AG04449 (cell line): ENCODE measurements at regions of chrX and their contacts with region 1.

Region 1: GRCh38 chrX:107672955-107673378 is 44.7 kb downstream of the PRPS1 start:
- DNase-seq: no peak
- H3K4me3 ChIP-seq: no peak overlapping the region
- CTCF ChIP-seq: peak; percentile 61

Region 2: DNA sequence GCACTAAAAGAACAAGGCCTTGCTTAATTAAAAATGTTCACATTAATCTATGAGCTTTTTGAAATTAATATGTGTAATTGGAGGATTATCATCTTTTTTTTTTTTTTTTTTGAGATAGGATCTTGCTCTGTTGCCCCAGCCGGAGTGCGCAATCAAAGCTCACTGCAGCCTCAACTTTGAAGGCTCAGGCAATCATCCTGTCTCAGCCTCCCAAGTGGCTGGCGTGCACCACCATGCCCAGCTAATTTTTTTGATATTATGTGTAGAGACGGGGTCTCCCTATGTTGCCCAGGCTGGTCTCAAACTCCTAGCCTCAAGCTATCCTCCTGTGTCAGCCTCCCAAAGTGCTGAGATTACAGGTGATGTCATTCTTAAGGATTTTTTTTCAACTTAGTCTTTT is 24.6 kb before region 1 on chrX:
- CTCF ChIA-PET with region 1: no interaction called
- POLR2A ChIA-PET with region 1: no interaction called
- DNase-seq: no peak
- H3K4me3 ChIP-seq: no peak overlapping the region
- CTCF ChIP-seq: no peak

Region 3: GRCh38 chrX:107662145-107662544 is 10.8 kb before region 1 on chrX:
- CTCF ChIA-PET with region 1: interaction called, 29 read pairs
- POLR2A ChIA-PET with region 1: no interaction called
- DNase-seq: no peak
- H3K4me3 ChIP-seq: no peak overlapping the region
- CTCF ChIP-seq: no peak

Region 4: GRCh38 chrX:107716816-107717700 is 44.1 kb after region 1 on chrX:
- CTCF ChIA-PET with region 1: interaction called, 116 read pairs
- POLR2A ChIA-PET with region 1: interaction called, 20 read pairs
- DNase-seq: no peak
- H3K4me3 ChIP-seq: peak overlapping the region; percentile 64
- CTCF ChIP-seq: no peak

Region 5: DNA sequence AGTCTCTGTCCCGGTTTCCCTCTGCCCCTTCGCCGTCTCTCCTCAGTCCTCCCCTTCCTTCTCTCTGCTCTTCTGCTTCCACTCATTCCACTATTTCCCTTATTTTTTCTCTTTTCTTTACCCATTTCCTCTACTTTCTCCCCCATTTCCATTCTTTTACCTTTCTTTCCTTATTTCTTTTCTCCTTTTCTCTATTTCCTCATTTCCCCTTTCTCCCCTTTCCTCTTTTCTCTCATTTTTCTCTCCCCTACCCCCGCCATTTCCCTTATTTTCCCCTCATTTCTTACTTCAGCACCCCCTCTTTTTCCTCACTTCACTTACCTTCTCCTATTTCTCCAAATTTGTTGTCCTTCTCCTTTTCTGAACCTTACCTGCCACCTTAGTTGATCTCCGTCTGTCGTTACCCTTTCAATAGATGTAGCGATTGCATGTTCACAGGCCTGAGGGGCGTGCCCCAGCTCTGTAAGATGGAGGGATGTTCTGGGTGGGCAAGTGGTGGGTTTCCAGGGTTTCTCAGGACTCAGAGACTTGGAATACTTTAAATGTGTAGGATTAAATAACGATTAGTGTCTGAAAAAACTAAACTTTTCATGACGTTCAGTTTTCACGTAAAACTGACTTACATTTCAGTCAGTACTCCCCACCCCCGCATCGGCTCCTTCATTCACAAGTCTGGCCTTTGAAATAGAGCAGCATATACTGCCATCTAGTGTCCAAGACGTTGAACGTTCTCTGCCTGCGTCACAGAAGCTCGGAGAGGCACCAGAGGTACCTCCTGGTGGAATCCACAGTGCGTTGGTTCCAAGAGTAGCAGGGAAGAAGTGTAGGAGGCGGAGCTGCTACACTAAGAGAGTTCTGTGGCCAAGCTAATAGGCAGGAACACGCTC is 103.9 kb after region 1 on chrX:
- CTCF ChIA-PET with region 1: interaction called, 28 read pairs
- POLR2A ChIA-PET with region 1: no interaction called
- DNase-seq: peak; percentile 57
- H3K4me3 ChIP-seq: peak overlapping the region; percentile 49
- CTCF ChIP-seq: peak; percentile 50

Region 6: DNA sequence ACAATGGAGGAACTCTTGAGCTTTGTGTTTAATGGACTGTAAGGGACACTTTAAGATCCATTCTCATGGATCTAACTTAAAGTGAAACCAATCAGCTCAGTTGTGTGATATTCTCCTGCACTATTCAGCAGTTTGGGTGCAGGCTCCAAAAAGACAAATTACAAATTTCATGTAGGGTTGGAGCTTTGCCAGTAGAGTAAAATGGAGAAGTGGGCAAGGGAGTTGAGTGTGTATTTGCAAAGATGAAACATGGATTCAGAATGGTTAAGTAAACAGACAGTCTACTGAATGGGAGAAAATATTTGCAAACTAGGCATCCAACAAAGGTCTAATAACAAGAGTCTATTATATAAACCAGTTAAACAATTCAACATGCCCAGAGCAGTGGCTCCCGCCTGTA is 131.5 kb after region 1 on chrX:
- CTCF ChIA-PET with region 1: no interaction called
- POLR2A ChIA-PET with region 1: no interaction called
- DNase-seq: no peak
- H3K4me3 ChIP-seq: no peak overlapping the region
- CTCF ChIP-seq: no peak